ENCODE measurements at regions of chr2 and their contacts with region 1.

Region 1: DNA sequence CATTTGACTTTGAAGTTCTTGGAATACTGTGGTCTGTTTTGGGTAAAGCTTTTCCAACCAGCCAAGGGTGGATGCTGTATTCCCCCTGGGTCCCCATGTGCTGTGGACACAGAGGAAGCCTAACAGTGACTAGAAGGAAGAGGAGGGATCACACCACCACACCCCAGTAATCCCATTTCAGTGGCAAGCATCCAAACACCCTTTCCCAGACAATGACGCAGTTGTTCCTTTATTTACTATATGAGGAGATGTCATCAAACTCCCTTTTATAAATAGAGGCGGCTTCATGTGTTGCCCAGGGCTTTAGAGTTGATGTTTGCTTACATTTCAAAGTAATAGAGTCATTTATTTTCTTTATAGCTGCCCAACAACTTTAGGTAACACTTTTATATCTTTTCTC is 959.4 kb upstream of the GYPC start:
- DNase-seq: no peak
- H3K4me3 Mint-ChIP-seq: no peak overlapping the region
- H3K27ac Mint-ChIP-seq: no peak overlapping the region
- H3K4me1 Mint-ChIP-seq: no peaks in the 10 kb centered on the region
- H3K27me3 Mint-ChIP-seq: no peaks in the 10 kb centered on the region

Region 2: GRCh38 chr2:125643585-125643984 is 53.0 kb before region 1 on chr2:
- intact Hi-C with region 1: no loop called
- DNase-seq: no peak
- H3K4me3 Mint-ChIP-seq: no peak overlapping the region
- H3K27ac Mint-ChIP-seq: no peak overlapping the region
- H3K4me1 Mint-ChIP-seq: no peaks in the 10 kb centered on the region
- H3K27me3 Mint-ChIP-seq: no peaks in the 10 kb centered on the region

Region 3: GRCh38 chr2:125656190-125656589 is 40.4 kb before region 1 on chr2:
- intact Hi-C with region 1: no loop called
- DNase-seq: no peak
- H3K4me3 Mint-ChIP-seq: no peak overlapping the region
- H3K27ac Mint-ChIP-seq: no peak overlapping the region
- H3K4me1 Mint-ChIP-seq: no peaks in the 10 kb centered on the region
- H3K27me3 Mint-ChIP-seq: no peaks in the 10 kb centered on the region

Region 4: DNA sequence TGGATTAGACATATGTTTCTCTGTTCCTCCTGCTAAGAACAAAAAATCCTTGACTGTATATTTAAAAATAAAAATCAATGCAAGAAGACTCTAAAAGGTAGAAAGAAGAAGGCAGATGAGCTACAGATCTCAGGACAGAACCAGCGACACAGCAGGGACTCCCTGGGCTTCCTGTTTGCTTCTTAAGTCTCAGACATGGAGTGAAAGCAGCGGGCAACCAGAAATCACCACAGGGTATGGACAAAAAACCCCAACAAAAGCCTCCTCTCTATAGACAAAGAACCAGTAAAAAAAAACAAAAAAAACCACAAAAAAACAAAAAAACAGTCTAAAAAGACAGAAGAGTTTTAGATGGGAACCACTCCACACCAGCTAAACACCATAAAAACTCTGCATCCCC is 11.6 kb before region 1 on chr2:
- intact Hi-C with region 1: loop called (anchors 1 kb)
- DNase-seq: no peak
- H3K4me3 Mint-ChIP-seq: no peak overlapping the region
- H3K27ac Mint-ChIP-seq: no peak overlapping the region
- H3K4me1 Mint-ChIP-seq: no peaks in the 10 kb centered on the region
- H3K27me3 Mint-ChIP-seq: no peaks in the 10 kb centered on the region

Measured in activated CD4-positive, alpha-beta T cell treated with anti-CD3 and anti-CD28 coated beads, Interleukin-2, amount 10 ng/mL, durations not matched to agents 24 days and 14 days (primary cell).